ENCODE measurements at regions of chr5 and their contacts with region 1.

Region 1: DNA sequence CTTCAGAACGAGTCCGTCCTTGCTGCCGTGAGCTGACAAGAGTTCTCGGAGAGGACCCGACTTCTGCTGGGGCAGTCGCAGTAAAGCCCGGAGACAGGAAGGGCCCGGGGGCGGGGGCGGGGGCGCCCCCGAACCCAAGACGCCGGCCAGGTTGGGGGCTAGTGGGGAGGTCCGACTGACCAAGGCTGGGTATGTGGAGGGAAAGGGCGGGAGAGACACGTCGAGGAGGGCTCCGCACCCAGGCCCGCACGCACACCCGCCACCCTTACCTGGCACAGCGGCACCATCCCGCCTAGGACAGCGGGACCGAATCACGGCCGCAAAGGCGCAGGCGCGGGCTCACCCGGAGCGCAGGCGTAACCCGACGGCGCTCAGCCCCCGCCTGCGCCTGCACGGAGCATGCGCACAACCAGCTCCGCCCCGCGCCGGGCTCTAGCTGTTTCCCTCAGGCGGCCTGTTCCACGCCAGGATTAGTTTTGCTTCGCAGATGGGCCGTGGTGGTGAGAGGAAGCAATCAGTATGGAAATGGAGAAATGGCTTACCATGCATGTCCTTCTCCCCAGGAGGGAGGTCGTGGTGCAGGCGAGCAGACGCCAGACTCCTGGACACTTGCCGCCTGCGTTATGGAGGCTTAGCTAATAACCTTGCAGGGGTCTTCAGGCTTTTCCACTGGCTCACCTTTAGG is at the start of gene MOCS2:
- DNase-seq: peak; percentile 89
- ATAC-seq: peak; percentile 98
- H3K4me3 Mint-ChIP-seq: peak within 1 kb of the TSS; percentile 95
- H3K27ac Mint-ChIP-seq: peak within 1 kb of the TSS; percentile 92
- H3K4me1 Mint-ChIP-seq: peaks cover 28% of the 10 kb centered on the region
- H3K27me3 Mint-ChIP-seq: no peaks in the 10 kb centered on the region
- CTCF ChIP-seq: no peak
- total RNA-seq, gene MOCS2: 16.8 and 17.0 TPM in 2 replicates

Region 2: DNA sequence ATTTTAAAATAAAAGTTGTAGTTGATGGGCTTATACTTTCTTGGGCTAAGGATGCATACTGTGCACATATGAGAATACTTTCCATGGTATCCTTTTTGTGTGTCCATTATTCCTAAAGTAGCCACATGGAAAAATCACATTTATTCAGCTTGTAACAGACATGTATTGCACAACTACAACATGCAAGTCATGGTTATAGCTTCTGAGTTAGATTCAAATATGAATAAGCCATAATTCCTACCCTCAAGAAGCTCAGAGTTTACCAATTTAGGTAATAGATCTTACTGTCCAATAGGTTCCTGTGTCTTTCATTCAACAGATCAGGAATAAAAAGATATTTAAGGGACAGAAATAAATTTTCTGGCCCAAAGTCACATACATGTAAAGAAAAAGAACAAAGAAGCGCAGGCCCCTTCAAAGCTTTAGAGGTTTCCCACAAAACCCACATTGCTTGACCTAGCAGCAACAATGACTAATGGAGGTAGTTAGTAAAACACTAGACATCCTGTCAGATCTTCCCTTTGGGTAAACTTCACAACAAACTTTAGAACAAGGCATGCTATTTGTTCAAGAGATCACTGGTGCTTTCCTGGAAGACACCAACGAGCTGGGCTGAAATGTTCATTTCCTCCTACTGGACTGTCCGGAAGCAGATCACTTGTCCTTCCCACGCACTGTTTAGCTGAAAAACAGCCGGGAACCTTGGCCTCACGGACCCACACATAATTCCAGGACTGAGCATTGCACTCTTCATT is 400.2 kb before region 1 on chr5:
- CTCF ChIA-PET with region 1: no interaction called
- POLR2A ChIA-PET with region 1: no interaction called
- intact Hi-C with region 1: no loop called
- DNase-seq: no peak
- ATAC-seq: no peak
- H3K4me3 Mint-ChIP-seq: no peak overlapping the region
- H3K27ac Mint-ChIP-seq: no peak overlapping the region
- H3K4me1 Mint-ChIP-seq: no peaks in the 10 kb centered on the region
- H3K27me3 Mint-ChIP-seq: no peaks in the 10 kb centered on the region
- CTCF ChIP-seq: no peak

Region 3: DNA sequence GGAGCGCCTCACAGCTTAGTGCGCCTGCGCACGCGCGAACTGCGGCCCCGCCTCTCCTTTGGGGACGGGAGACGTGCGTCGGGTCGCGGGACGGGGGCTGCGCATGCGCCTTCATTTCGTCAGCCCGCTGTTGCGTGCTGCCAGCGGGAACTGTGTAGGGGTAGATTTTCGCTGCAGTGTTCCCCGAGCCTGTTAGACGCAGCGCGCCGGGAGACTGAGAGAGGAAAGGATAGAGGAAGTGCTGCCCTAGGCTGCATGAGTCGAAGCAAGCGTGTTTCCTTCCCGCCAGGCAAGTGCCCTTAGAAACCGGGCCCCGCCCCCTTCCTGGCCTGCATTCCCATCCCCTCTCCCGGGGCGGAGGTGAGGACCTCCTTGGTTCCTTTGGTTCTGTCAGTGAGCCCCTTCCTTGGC is 309.6 kb before region 1 on chr5:
- CTCF ChIA-PET with region 1: no interaction called
- POLR2A ChIA-PET with region 1: interaction called, 9 read pairs
- intact Hi-C with region 1: loop called (anchors 1 kb)
- DNase-seq: peak; percentile 91
- ATAC-seq: peak; percentile 88
- H3K4me3 Mint-ChIP-seq: peak overlapping the region; percentile 93
- H3K27ac Mint-ChIP-seq: peak overlapping the region; percentile 90
- H3K4me1 Mint-ChIP-seq: peaks cover 57% of the 10 kb centered on the region
- H3K27me3 Mint-ChIP-seq: no peaks in the 10 kb centered on the region
- CTCF ChIP-seq: no peak

Region 4: GRCh38 chr5:53481887-53482716 is 372.5 kb after region 1 on chr5:
- CTCF ChIA-PET with region 1: no interaction called
- POLR2A ChIA-PET with region 1: no interaction called
- intact Hi-C with region 1: loop called (anchors 5 kb)
- DNase-seq: peak; percentile 40
- ATAC-seq: peak; percentile 62
- H3K4me3 Mint-ChIP-seq: peak overlapping the region; percentile 84
- H3K27ac Mint-ChIP-seq: no peak overlapping the region
- H3K4me1 Mint-ChIP-seq: peaks cover 39% of the 10 kb centered on the region
- H3K27me3 Mint-ChIP-seq: peaks cover 44% of the 10 kb centered on the region
- CTCF ChIP-seq: peak; percentile 24

Region 5: DNA sequence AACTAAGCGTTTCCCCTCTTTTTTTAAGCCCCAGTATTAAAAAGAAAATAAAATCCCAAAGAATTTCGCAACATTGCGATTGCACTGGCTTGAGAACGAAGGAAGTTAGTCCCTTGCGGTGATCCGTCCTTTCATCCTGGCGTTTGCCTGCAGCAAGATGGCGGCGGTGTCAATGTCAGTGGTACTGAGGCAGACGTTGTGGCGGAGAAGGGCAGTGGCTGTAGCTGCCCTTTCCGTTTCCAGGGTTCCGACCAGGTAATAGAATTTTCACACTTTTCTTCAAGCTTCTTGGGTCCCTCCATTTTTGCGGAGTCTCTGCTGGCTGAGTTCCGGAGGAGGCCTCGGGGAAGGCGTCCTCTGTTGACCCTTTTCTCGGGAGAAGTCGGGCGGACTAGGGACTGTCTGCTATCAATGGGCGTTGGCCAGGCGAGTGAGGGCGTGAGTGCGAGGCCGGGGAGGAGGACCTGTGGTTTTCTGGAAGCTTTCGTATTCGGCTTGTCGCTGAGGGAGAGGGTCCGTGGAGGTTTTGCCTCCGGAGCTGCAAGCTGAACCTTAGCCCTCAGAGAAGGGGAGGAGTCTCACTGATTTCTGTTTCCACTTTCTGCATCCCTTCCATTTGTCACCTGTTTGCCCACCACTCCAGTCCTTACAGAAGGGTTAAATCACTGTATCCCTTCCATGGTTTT is 451.1 kb after region 1 on chr5 and contains the start of gene NDUFS4:
- CTCF ChIA-PET with region 1: no interaction called
- POLR2A ChIA-PET with region 1: no interaction called
- intact Hi-C with region 1: loop called (anchors 10 kb)
- DNase-seq: peak; percentile 50
- ATAC-seq: peak; percentile 93
- H3K4me3 Mint-ChIP-seq: peak within 1 kb of the TSS; percentile 100
- H3K27ac Mint-ChIP-seq: peak within 1 kb of the TSS; percentile 94
- H3K4me1 Mint-ChIP-seq: peaks cover 37% of the 10 kb centered on the region
- H3K27me3 Mint-ChIP-seq: peaks cover 14% of the 10 kb centered on the region
- CTCF ChIP-seq: no peak
- total RNA-seq, gene NDUFS4: 35.6 and 40.9 TPM in 2 replicates

Measured in activated B cell treated with CpG ODN at 0.5 μM for 24 hours (primary cell).